PC-9 (cell line): ENCODE measurements at regions of chr5 and their contacts with region 1.

Region 1: GRCh38 chr5:112551419-112552032 is 132.4 kb upstream of the EPB41L4A start:
- DNase-seq: peak in 1 of 2 experiments; percentile 20
- H3K4me3 ChIP-seq: no peak overlapping the region
- H3K27ac ChIP-seq: no peak overlapping the region
- H3K4me1 ChIP-seq: no peaks in the 10 kb centered on the region
- H3K27me3 ChIP-seq: no peaks in the 10 kb centered on the region
- CTCF ChIP-seq: peak; percentile 79

Region 2: GRCh38 chr5:112479407-112479806 is 72.1 kb before region 1 on chr5:
- CTCF ChIA-PET with region 1: interaction called, 10 read pairs
- POLR2A ChIA-PET with region 1: no interaction called
- intact Hi-C with region 1: no loop called
- DNase-seq: peak; percentile 50 to 51
- H3K4me3 ChIP-seq: no peak overlapping the region
- H3K27ac ChIP-seq: no peak overlapping the region
- H3K4me1 ChIP-seq: no peaks in the 10 kb centered on the region
- H3K27me3 ChIP-seq: no peaks in the 10 kb centered on the region
- CTCF ChIP-seq: no peak

Region 3: GRCh38 chr5:112757468-112758208 is 206.1 kb after region 1 on chr5:
- CTCF ChIA-PET with region 1: interaction called, 3 read pairs
- POLR2A ChIA-PET with region 1: no interaction called
- intact Hi-C with region 1: loop called (anchors 1 kb)
- DNase-seq: peak; percentile 1 to 54
- H3K4me3 ChIP-seq: no peak overlapping the region
- H3K27ac ChIP-seq: no peak overlapping the region
- H3K4me1 ChIP-seq: no peaks in the 10 kb centered on the region
- H3K27me3 ChIP-seq: no peaks in the 10 kb centered on the region
- CTCF ChIP-seq: peak; percentile 85

Region 4: GRCh38 chr5:112921833-112922817 is 370.6 kb after region 1 on chr5 and contains the start of gene REEP5:
- CTCF ChIA-PET with region 1: no interaction called
- POLR2A ChIA-PET with region 1: no interaction called
- intact Hi-C with region 1: loop called (anchors 1 kb)
- DNase-seq: peak; percentile 66 to 85
- H3K4me3 ChIP-seq: peak within 1 kb of the TSS; percentile 97
- H3K27ac ChIP-seq: peak within 1 kb of the TSS; percentile 53
- H3K4me1 ChIP-seq: peaks cover 7% of the 10 kb centered on the region; the same call in 1 of the 2 replicates
- H3K27me3 ChIP-seq: no peaks in the 10 kb centered on the region
- CTCF ChIP-seq: peak; percentile 57
- total RNA-seq, gene REEP5: 45.2 and 53.6 TPM in 2 replicates

Region 5: GRCh38 chr5:113354055-113354454 is 802.5 kb after region 1 on chr5:
- CTCF ChIA-PET with region 1: no interaction called
- POLR2A ChIA-PET with region 1: no interaction called
- intact Hi-C with region 1: no loop called
- DNase-seq: no peak
- H3K4me3 ChIP-seq: no peak overlapping the region
- H3K27ac ChIP-seq: no peak overlapping the region
- H3K4me1 ChIP-seq: no peaks in the 10 kb centered on the region
- H3K27me3 ChIP-seq: no peaks in the 10 kb centered on the region
- CTCF ChIP-seq: no peak

Region 6: DNA sequence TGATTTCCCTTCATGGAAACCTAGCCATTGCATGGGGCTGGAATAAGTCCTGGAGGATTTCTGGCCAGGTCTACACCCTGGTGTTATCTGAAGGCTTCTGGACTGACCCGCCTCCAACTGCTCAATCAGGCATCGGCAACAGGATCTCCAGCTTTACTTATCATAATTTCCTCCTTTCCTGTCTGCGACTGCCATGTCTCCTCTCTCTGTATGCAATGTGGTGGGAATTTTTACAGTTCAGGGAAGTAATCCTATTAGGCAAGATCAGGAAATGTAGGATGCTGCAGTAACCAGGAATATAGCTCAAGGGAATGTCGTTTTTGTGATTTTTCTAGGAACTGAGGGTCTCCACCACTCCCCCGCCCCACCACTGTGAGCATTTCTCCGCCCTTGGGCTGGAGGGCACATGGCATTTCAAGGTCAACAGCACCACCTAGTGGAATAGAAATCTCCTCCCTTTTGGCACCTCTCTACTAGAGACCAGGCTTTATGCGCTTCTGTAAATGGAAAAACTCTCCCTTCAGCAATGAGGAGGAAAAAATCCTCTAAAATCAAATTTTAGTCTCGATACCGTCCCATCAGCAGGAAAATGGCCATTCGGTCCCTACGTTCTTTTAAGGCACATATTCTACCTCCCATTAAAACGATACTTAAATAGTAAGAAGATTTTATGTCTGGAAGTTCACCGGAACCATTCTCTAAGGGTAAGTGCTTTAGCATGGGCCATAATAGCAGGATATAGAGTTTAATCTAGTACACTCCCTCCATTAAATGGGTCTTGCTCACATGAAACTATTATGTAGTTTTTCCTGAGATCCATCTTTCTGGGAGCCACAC is 1055.0 kb after region 1 on chr5:
- CTCF ChIA-PET with region 1: no interaction called
- POLR2A ChIA-PET with region 1: no interaction called
- intact Hi-C with region 1: loop called (anchors 2 kb)
- DNase-seq: peak in 1 of 2 experiments; percentile 35
- H3K4me3 ChIP-seq: no peak overlapping the region
- H3K27ac ChIP-seq: no peak overlapping the region
- H3K4me1 ChIP-seq: no peaks in the 10 kb centered on the region
- H3K27me3 ChIP-seq: no peaks in the 10 kb centered on the region
- CTCF ChIP-seq: peak; percentile 85